WTC11 (cell line): ENCODE measurements at regions of chr19 and their contacts with region 1.

Region 1: GRCh38 chr19:29528350-29528945 is 2.7 kb downstream of the VSTM2B start:
- DNase-seq: peak; percentile 86
- ATAC-seq: peak; percentile 49
- H3K4me3 Mint-ChIP-seq: peak overlapping the region; percentile 69
- H3K27ac Mint-ChIP-seq: no peak overlapping the region
- H3K4me1 Mint-ChIP-seq: peaks cover 24% of the 10 kb centered on the region
- H3K27me3 Mint-ChIP-seq: peaks cover 79% of the 10 kb centered on the region
- CTCF ChIP-seq: peak; percentile 73

Region 2: GRCh38 chr19:29290853-29291252 is 237.6 kb before region 1 on chr19:
- CTCF ChIA-PET with region 1: interaction called, 12 read pairs
- POLR2A ChIA-PET with region 1: no interaction called
- DNase-seq: peak; percentile 26
- ATAC-seq: peak; percentile 62
- H3K4me3 Mint-ChIP-seq: no peak overlapping the region
- H3K27ac Mint-ChIP-seq: no peak overlapping the region
- H3K4me1 Mint-ChIP-seq: peaks cover 16% of the 10 kb centered on the region
- H3K27me3 Mint-ChIP-seq: peaks cover 3% of the 10 kb centered on the region; the same call in 1 of the 2 replicates
- CTCF ChIP-seq: no peak

Region 3: GRCh38 chr19:29439688-29440550 is 88.5 kb before region 1 on chr19:
- CTCF ChIA-PET with region 1: no interaction called
- POLR2A ChIA-PET with region 1: no interaction called
- DNase-seq: no peak
- ATAC-seq: no peak
- H3K4me3 Mint-ChIP-seq: no peak overlapping the region
- H3K27ac Mint-ChIP-seq: no peak overlapping the region
- H3K4me1 Mint-ChIP-seq: no peaks in the 10 kb centered on the region
- H3K27me3 Mint-ChIP-seq: no peaks in the 10 kb centered on the region; the same call in 1 of the 2 replicates
- CTCF ChIP-seq: no peak

Region 4: GRCh38 chr19:29467824-29468401 is 60.5 kb before region 1 on chr19:
- CTCF ChIA-PET with region 1: interaction called, 18 read pairs
- POLR2A ChIA-PET with region 1: no interaction called
- DNase-seq: peak; percentile 44
- ATAC-seq: peak; percentile 82
- H3K4me3 Mint-ChIP-seq: no peak overlapping the region
- H3K27ac Mint-ChIP-seq: no peak overlapping the region
- H3K4me1 Mint-ChIP-seq: no peaks in the 10 kb centered on the region; the same call in 1 of the 2 replicates
- H3K27me3 Mint-ChIP-seq: no peaks in the 10 kb centered on the region; the same call in 1 of the 2 replicates
- CTCF ChIP-seq: peak; percentile 16; the same call in 1 of the 2 replicates

Region 5: GRCh38 chr19:29505097-29505824 is 23.2 kb before region 1 on chr19:
- CTCF ChIA-PET with region 1: interaction called, 17 read pairs
- POLR2A ChIA-PET with region 1: interaction called, 3 read pairs
- DNase-seq: no peak
- ATAC-seq: no peak
- H3K4me3 Mint-ChIP-seq: no peak overlapping the region
- H3K27ac Mint-ChIP-seq: no peak overlapping the region
- H3K4me1 Mint-ChIP-seq: peaks cover 9% of the 10 kb centered on the region
- H3K27me3 Mint-ChIP-seq: 0 out of 2 replicates have a peak, but pooled peaks cover 3% of the 10 kb centered on the region
- CTCF ChIP-seq: no peak

Region 6: DNA sequence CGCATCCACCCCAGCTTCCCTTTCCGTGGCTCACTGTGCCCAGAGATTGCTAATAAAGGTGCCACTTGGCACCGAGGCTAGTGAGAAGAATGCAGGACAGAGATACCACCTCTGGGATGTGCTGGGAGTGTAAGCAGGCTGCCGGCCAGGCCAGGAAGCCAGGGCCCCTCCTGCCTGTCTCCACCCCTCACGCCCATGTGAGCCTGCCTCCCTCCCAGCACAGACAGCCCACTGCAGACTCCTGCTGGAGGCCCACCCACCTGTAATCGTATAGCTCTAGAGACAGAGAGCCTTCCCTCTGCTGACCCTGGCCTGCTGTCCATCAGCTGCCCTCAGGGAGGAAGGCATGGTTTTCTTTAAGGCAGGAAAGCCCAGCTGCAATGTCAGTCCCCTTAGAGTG is 11.2 kb after region 1 on chr19:
- CTCF ChIA-PET with region 1: interaction called, 11 read pairs
- POLR2A ChIA-PET with region 1: no interaction called
- DNase-seq: no peak
- ATAC-seq: peak; percentile 61
- H3K4me3 Mint-ChIP-seq: no peak overlapping the region
- H3K27ac Mint-ChIP-seq: no peak overlapping the region
- H3K4me1 Mint-ChIP-seq: peaks cover 11% of the 10 kb centered on the region
- H3K27me3 Mint-ChIP-seq: no peaks in the 10 kb centered on the region; the same call in 1 of the 2 replicates
- CTCF ChIP-seq: no peak